ENCODE measurements at regions of chr15 and their contacts with region 1.

Region 1: DNA sequence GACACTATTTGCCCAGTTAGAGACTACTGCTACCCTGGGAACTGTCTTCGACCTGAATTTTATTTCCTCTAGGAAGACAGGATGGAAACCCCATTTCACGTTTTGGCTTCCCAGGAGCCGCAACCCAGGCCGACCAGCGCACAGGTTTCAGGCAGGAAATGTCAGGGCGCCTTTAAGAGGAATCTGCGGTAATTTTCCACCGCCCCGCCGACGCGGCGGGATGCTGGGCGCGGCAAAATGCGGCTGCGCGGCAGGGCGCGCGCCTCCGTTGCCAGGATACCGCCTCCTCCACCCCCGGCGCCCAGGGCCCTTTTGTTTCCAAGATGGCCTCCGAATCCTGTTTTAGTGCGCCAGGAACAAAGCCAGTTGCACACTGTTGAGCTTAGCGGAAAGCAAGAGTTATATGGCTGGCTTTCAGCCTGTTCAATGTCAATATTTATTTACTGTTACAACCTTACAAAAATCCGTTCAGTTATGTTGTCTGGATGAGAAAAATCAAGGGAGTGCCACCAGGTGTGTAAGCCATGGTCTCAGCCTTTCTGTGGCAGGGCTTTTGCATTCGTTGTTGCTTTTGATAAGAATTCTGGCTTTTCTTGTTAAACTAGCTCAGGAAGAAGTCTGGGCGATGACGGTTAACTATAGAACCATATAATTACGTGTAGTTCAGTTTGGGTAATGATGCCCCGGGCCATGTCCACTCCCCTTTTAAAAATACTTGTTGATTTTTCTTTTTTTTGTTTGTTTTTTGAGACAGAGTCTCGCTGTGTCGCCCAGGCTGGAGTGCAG is 79.7 kb upstream of the CHD2 start:
- DNase-seq: peak; percentile 93
- ATAC-seq: peak; percentile 95 to 99 (median 98)
- H3K4me3 ChIP-seq: peak overlapping the region in 9 of 10 donors; percentile 25 to 57 (median 52)
- H3K27ac ChIP-seq: peak overlapping the region; percentile 43 to 91 (median 86)
- H3K4me1 ChIP-seq: peaks cover 0 to 32% (median 13%) of the 10 kb centered on the region in 9 donors
- H3K27me3 ChIP-seq: no peaks in the 10 kb centered on the region
- CTCF ChIP-seq: no peak

Region 2: GRCh38 chr15:92772626-92773244 is 47.7 kb before region 1 on chr15:
- intact Hi-C with region 1: no loop called
- DNase-seq: no peak
- ATAC-seq: no peak
- H3K4me3 ChIP-seq: no peak overlapping the region
- H3K27ac ChIP-seq: no peak overlapping the region
- H3K4me1 ChIP-seq: no peaks in the 10 kb centered on the region
- H3K27me3 ChIP-seq: no peaks in the 10 kb centered on the region
- CTCF ChIP-seq: no peak

Region 3: GRCh38 chr15:92831655-92832328 is 11.4 kb after region 1 on chr15:
- intact Hi-C with region 1: loop called in 3 of 10 experiments (anchors 1 kb)
- DNase-seq: peak; percentile 91 to 96
- ATAC-seq: peak; percentile 96 to 99 (median 98)
- H3K4me3 ChIP-seq: peak overlapping the region in 9 of 10 donors; percentile 1 to 51 (median 36)
- H3K27ac ChIP-seq: peak overlapping the region; percentile 81 to 97 (median 92)
- H3K4me1 ChIP-seq: peaks cover 14 to 50% (median 40%) of the 10 kb centered on the region in 9 donors
- H3K27me3 ChIP-seq: no peaks in the 10 kb centered on the region
- CTCF ChIP-seq: peak in 1 of 9 donors; percentile 10

Region 4: GRCh38 chr15:92899948-92900708 is 79.7 kb after region 1 on chr15 and contains the start of gene CHD2:
- intact Hi-C with region 1: no loop called
- DNase-seq: peak; percentile 33 to 56
- ATAC-seq: peak in 7 of 8 donors; percentile 23 to 53 (median 47)
- H3K4me3 ChIP-seq: peak within 1 kb of the TSS; percentile 30 to 70 (median 60)
- H3K27ac ChIP-seq: peak within 1 kb of the TSS; percentile 90 to 99 (median 95)
- H3K4me1 ChIP-seq: peaks cover 0 to 69% (median 54%) of the 10 kb centered on the region in 9 donors
- H3K27me3 ChIP-seq: no peaks in the 10 kb centered on the region
- CTCF ChIP-seq: no peak
- total RNA-seq, gene CHD2: 38.0 to 74.0 (median 56.3) TPM

Measured in heart right ventricle (tissue), 16 donors.